Right ventricle myocardium inferior (tissue), 1 donor: ENCODE measurements at regions of chr12 and their contacts with region 1.

Region 1: GRCh38 chr12:131949431-131950181 is at the start of gene EP400:
- DNase-seq: peak; percentile 98
- ATAC-seq: peak; percentile 99
- total RNA-seq, gene EP400: 13.9 TPM

Region 2: GRCh38 chr12:131830335-131830913 is 119.2 kb before region 1 on chr12:
- intact Hi-C with region 1: loop called (anchors 10 kb)
- DNase-seq: peak; percentile 92
- ATAC-seq: peak; percentile 91

Region 3: DNA sequence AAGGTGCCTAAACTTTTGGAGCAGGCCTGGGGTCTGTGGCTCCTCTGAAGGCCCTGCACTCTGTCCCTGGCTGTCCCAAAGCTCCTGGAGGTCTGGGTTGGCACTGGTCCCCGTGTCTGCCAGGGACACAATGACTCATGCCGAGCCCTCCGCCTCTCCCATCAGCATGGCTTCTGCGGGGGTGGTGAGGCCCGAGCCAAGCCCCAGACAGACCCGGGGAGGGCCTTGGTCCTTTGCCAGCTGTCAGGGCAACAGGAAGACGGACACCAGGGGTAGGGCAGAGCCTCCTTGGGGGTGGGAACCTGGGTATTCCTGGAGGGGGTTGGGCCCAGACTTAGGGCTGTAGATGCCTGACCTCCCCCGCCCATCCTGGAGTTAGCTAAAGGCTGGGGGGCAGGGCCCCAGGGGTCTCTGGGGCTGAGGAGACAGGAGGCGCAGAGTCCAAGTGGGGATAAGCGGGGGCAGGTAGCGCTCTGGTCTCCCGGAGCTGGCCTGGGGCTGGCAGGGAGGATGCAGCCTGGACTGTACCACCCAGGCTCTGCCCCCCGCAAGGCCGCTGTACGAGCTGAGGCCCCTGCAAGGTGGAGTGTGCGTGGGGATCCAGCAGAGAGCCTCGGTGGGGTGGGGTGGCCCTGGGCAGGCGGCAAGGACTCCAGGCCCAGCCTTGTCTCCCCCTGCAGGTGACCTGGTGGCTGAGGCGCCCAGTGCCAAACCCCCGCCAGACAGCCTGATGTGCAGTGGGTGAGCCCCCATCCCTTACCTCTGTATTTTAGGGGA is 36.9 kb before region 1 on chr12:
- intact Hi-C with region 1: no loop called
- DNase-seq: peak; percentile 93
- ATAC-seq: peak; percentile 86